HEK293T (cell line): ENCODE measurements at regions of chr19 and their contacts with region 1.

Region 1: DNA sequence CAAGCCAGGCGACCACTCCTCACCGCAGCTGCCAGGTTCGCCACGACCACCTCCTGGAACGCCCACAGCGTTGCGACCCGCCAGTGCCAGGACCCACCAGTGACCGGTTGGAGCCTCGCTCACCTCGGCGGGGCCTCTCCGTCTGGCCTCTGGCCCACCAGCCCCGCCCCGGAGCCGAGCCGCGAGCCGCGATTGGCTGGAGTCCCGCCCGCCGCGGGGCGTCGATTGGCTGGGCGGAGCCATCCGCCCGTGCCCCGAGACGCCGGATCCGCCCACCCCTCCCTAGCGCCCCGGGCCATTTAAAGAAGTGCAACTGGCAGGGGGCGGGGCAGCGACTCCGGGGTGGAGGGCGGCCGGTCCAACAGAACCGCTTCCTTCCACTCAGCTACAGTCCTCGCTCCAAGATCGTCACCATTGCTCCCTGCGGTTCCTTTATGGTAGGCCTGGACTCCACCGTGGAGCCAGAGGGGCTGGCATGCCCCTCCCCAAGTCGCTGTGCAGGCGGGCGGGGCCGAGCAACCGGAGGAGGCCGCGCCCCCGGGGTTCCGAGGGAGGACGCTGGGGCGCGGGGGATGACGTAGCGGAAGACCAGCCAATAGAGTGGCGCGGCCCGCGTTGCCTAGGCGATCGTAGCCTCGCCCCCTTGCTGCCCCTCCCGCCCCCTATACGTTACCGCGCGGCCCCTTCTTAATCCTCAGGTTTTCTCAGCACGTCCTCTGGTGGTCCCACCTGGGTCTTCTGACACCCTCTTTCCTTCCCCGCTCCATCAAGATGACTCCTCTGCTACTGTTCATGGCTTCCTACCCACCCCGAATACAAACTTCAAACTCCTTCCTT is at the start of gene SERTAD3:
- DNase-seq: peak; percentile 92

Region 2: GRCh38 chr19:40305403-40305802 is 139.0 kb before region 1 on chr19:
- CTCF ChIA-PET with region 1: no interaction called
- POLR2A ChIA-PET with region 1: no interaction called
- DNase-seq: peak; percentile 80

Region 3: DNA sequence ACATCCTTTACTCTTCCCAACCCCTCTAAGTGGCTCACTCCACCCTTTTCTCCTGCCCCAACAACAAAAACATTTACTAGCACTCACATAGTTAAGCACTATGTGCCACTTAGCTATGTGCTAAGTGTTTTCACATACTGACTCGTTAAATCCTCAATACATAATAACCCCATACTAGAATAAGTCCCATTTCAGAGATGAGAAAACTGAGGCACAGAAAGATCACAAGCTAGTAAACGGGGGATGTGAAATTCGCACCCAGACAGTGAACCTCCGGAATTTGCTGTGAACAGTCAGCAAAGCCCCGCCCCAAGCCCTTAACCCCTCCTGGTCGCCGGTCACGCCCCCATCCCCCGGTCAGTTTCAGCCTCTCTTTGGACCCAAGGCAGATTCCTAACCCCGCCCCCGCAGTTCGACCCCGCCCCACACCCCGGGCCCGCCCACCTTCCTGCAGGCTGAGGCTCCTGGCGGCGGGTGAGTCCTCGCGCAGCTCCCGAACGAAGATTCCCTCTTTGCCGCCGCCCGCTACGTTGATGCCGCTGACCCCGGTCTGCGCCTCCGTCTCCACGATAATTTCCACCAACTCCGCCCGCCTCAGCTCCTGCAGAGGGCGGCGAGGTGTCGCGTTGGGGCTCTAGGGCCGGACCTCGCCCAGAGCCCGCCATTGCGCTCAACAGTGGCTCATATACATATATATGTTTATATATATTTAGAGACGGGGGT is 41.0 kb before region 1 on chr19:
- CTCF ChIA-PET with region 1: no interaction called
- POLR2A ChIA-PET with region 1: interaction called, 12 read pairs
- DNase-seq: peak; percentile 96

Region 4: DNA sequence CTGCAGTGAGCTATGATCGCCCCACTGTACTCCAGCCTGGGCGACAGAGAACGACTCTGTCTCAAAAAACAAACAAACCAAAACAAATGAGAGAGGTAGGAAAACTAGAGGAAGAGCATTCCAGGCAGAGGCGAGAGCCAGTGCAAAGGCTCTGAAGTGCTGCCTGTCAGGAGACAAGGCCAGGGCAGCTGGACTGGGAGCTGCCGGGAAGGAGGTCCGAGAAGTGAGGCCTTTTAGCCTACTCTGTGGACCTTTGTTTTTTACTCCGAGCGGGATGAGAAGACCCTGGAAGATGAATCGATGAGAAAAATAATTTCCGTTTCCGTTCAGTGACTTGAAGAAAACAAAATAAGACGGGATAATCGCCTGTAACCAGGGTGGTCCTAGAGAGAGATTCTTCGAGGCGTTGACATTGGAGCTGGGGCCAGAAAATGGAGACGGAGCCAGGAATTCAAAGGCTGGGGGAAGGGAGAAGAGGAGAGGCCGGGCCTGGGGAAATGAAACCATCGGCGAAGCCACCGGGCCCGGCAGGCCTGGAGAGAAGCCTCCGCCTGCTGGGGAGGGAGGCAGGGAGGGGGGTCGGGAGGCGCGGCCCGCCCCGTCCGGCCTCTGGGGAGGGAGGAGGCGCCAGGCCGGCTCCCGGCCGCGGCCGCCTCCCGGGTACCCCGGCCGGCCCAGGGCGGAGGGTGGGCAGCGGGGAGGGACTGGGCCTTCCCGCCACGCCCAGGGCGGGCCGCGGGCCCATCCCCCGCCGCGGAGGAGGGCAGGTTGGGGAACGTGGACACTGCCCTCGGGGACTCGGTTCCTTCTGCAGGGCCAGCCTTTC is 10.8 kb before region 1 on chr19:
- CTCF ChIA-PET with region 1: no interaction called
- POLR2A ChIA-PET with region 1: interaction called, 56 read pairs
- DNase-seq: peak; percentile 79

Region 5: DNA sequence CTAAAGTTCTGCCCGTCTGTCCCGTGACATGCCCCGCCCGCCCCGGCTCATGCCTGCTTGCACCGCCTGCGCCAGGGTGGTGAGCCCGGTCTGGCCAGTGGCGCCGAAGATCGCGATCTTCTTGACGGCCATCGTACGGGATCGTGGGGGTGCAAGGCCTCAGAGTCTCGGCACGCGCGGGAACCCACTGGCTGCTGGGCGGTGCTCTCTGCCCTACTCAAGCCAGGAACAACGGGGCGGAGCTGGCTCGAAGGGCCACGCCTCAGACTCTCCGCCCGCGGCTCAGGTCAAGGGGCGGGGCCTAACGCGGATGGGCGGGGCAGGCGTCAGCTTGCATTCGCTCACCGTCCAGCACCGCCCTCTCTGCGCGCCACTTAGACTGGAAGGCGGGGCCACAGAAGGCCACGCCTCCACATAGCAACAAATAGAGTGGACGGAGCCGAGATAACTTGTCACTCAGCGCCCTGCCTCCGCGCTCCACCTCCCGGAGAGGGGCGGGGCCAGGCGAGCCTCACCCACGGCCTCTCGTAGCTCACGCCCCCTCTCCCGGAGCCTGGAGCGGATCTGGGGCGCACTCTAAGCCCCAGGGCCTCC is 21.2 kb after region 1 on chr19 and contains the start of gene BLVRB:
- CTCF ChIA-PET with region 1: interaction called, 4 read pairs
- POLR2A ChIA-PET with region 1: interaction called, 15 read pairs
- DNase-seq: peak; percentile 99

Region 6: GRCh38 chr19:40542202-40542859 is 97.9 kb after region 1 on chr19:
- CTCF ChIA-PET with region 1: no interaction called
- POLR2A ChIA-PET with region 1: no interaction called
- DNase-seq: no peak